Aorta (tissue), 5 donors: ENCODE measurements at regions of chr4 and their contacts with region 1.

Region 1: GRCh38 chr4:127604949-127605709 is 27.6 kb upstream of the INTU start:
- DNase-seq: no peak
- ATAC-seq: no peak
- H3K4me3 ChIP-seq: no peak overlapping the region
- H3K27ac ChIP-seq: no peak overlapping the region
- H3K4me1 ChIP-seq: no peaks in the 10 kb centered on the region
- H3K27me3 ChIP-seq: no peaks in the 10 kb centered on the region

Region 2: GRCh38 chr4:127732613-127733328 is 127.6 kb after region 1 on chr4:
- intact Hi-C with region 1: loop called (anchors 1 to 2 kb)
- DNase-seq: no peak
- ATAC-seq: no peak
- H3K4me3 ChIP-seq: no peak overlapping the region
- H3K27ac ChIP-seq: no peak overlapping the region
- H3K4me1 ChIP-seq: no peaks in the 10 kb centered on the region
- H3K27me3 ChIP-seq: no peaks in the 10 kb centered on the region